Activated CD4-positive, alpha-beta memory T cell treated with anti-CD3 and anti-CD28 coated beads, Interleukin-2, amount 10 ng/mL, durations not matched to agents 7 days and 5 days (primary cell): ENCODE measurements at regions of chr6 and their contacts with region 1.

Region 1: GRCh38 chr6:89432875-89433251 is at the start of gene ANKRD6:
- DNase-seq: peak; percentile 83
- H3K4me3 Mint-ChIP-seq: peak within 1 kb of the TSS; percentile 75
- H3K27ac Mint-ChIP-seq: peak within 1 kb of the TSS; percentile 42
- H3K4me1 Mint-ChIP-seq: peaks cover 13% of the 10 kb centered on the region
- H3K27me3 Mint-ChIP-seq: peaks cover 45% of the 10 kb centered on the region
- total RNA-seq, gene ANKRD6: 4.2 to 4.8 TPM

Region 2: DNA sequence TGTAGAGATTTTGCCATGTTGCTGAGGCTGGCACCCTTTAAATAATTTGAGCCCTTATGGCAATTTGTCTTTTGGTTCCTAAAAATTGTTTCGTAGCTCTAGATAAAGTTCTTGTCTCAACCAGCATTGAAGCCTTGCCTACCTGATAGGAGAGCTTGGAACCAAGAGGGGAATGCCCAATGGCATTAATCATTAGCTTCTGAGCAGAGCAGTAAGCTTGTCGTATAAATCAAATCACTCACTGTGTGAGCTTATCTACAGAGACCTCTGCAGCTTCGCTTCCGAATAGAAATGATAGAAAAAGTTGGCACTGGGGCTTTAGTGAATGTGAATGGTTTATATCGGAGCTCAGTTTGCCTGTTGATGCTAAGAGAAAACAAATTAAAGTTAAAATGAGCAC is 10.8 kb after region 1 on chr6:
- CTCF ChIA-PET with region 1: interaction called, 17 read pairs
- POLR2A ChIA-PET with region 1: no interaction called
- DNase-seq: no peak
- H3K4me3 Mint-ChIP-seq: no peak overlapping the region
- H3K27ac Mint-ChIP-seq: no peak overlapping the region
- H3K4me1 Mint-ChIP-seq: no peaks in the 10 kb centered on the region
- H3K27me3 Mint-ChIP-seq: peaks cover 7% of the 10 kb centered on the region

Region 3: GRCh38 chr6:89610149-89610642 is 177.3 kb after region 1 on chr6:
- CTCF ChIA-PET with region 1: interaction called, 54 read pairs
- POLR2A ChIA-PET with region 1: interaction called, 5 read pairs
- DNase-seq: peak; percentile 78
- H3K4me3 Mint-ChIP-seq: no peak overlapping the region
- H3K27ac Mint-ChIP-seq: no peak overlapping the region
- H3K4me1 Mint-ChIP-seq: peaks cover 18% of the 10 kb centered on the region
- H3K27me3 Mint-ChIP-seq: no peaks in the 10 kb centered on the region

Region 4: DNA sequence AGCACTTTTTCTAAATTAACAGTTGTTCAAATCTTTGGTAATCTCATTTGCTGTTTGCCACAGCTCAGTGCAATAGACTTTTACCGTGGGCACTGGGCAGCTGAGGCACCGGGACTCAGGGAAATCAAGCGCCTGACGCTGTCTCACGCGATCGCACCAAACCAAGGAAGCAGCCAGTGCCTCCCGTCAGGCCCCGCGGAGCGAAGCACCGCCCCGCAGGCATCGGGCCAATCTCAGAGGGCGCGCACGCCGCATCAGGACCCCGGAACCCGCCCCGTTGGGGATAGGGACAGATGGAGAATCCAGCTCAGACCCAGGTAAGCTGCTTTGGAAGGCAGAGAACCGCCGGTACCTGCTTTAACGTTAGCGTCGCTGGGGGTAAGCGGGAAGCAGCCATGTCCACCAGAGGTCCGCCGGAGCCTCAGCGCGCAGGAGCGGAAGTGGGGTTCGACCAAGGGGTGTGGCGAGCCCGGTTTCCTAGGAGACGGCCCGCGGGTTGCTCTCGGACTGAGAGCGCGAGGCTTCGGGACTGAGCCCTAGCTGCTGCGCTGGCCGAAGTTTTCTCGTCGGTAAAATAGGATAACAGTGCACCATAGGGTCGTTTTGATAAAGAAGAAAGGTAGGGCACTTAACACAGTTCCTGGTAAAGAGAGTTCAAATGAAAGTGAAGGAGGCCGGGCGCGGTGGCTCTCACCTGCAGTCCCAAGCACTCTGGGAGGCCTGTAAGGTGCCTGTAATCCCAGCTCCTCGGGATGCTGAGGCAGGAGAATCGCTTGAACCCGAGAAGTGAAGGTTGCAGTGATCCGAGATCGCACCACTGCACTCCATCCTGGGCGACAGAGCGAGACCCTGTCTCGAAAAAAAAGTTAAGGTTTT is 205.7 kb after region 1 on chr6 and contains the start of gene LYRM2:
- CTCF ChIA-PET with region 1: interaction called, 10 read pairs
- POLR2A ChIA-PET with region 1: interaction called, 5 read pairs
- DNase-seq: peak; percentile 92
- H3K4me3 Mint-ChIP-seq: peak within 1 kb of the TSS; percentile 90
- H3K27ac Mint-ChIP-seq: peak within 1 kb of the TSS; percentile 97
- H3K4me1 Mint-ChIP-seq: peaks cover 37% of the 10 kb centered on the region
- H3K27me3 Mint-ChIP-seq: no peaks in the 10 kb centered on the region
- total RNA-seq, gene LYRM2: 31.4 to 34.4 TPM